ENCODE measurements at regions of chr3 and their contacts with region 1.

Region 1: DNA sequence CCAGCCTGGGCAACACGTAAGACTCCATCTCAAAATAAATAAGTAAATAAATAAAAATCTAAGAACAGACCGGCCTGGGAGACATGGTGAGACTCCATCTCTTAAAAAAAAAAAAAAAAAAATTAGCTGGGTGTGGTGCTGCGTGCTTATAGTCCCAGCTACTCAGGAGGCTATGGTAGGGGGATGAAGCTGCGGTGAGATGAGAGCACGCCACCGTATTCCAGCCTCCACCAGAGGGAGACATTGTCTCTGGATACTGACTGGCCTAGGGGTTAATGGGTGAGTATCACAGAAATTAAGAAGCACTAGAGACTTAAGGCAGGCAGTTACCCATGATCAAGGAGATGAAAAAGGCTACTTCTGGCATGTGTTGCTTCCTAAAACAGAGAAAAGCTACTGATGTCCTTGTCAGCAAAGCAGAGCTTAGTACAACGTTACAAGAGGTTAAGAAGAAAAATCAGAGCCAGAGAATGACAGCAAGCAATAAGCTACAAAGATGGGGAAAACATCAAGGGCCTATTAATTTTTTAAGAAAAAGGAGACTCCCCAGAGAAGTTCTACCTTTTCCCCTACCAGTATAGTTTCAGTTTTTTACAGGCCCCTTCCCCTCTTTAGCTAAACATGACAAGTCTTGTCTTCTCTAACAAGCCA is 8.6 kb downstream of the TFRC start:
- DNase-seq: peak; percentile 41 to 81 (median 66)
- H3K4me3 ChIP-seq: no peak overlapping the region
- H3K4me3 Mint-ChIP-seq: no peak overlapping the region
- H3K27ac ChIP-seq: no peak overlapping the region
- H3K27ac Mint-ChIP-seq: peak overlapping the region; percentile 9 to 81 (median 43)
- H3K4me1 ChIP-seq: peaks cover 13% of the 10 kb centered on the region
- H3K4me1 Mint-ChIP-seq: peaks cover 17 to 42% (median 29%) of the 10 kb centered on the region in 3 donors
- H3K27me3 ChIP-seq: no peaks in the 10 kb centered on the region
- H3K27me3 Mint-ChIP-seq: no peaks in the 10 kb centered on the region

Region 2: DNA sequence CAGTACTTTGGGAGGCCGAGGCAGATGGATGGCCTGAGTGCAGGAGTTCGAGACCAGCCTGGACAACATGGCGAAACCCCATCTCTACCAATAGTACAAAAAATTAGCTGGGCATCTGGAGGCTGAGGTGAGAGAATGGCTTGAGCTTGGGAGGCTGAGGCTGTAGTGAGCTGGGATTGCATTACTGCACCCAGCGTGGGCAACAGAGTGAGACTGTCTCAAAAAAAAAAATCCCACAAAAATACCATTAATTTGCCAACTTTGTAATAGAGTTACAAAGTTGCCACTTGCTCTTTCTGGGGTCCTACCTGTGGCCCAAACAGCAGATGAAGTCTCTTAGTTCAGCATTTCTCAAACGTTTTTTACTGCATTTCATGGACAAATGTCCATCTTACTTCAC is 14.6 kb after region 1 on chr3:
- CTCF ChIA-PET with region 1: interaction called, 13 read pairs
- POLR2A ChIA-PET with region 1: no interaction called
- DNase-seq: no peak
- H3K4me3 ChIP-seq: no peak overlapping the region
- H3K4me3 Mint-ChIP-seq: no peak overlapping the region
- H3K27ac ChIP-seq: no peak overlapping the region
- H3K27ac Mint-ChIP-seq: no peak overlapping the region
- H3K4me1 ChIP-seq: peaks cover 2% of the 10 kb centered on the region
- H3K4me1 Mint-ChIP-seq: peaks cover 0 to 1% (median under 1%) of the 10 kb centered on the region in 3 donors
- H3K27me3 ChIP-seq: no peaks in the 10 kb centered on the region
- H3K27me3 Mint-ChIP-seq: no peaks in the 10 kb centered on the region

Region 3: GRCh38 chr3:196186651-196187573 is 113.6 kb after region 1 on chr3:
- CTCF ChIA-PET with region 1: interaction called, 263 read pairs
- POLR2A ChIA-PET with region 1: no interaction called
- DNase-seq: peak in 1 of 5 donors; percentile 35
- H3K4me3 ChIP-seq: peak overlapping the region; percentile 19
- H3K4me3 Mint-ChIP-seq: peak overlapping the region in 6 of 7 donors; percentile 58 to 87 (median 70)
- H3K27ac ChIP-seq: peak overlapping the region; percentile 16
- H3K27ac Mint-ChIP-seq: peak overlapping the region; percentile 66 to 96 (median 88)
- H3K4me1 ChIP-seq: peaks cover 25% of the 10 kb centered on the region
- H3K4me1 Mint-ChIP-seq: peaks cover 32 to 43% (median 36%) of the 10 kb centered on the region in 3 donors
- H3K27me3 ChIP-seq: no peaks in the 10 kb centered on the region
- H3K27me3 Mint-ChIP-seq: peaks cover 0 to 2% of the 10 kb centered on the region in 2 donors

Region 4: GRCh38 chr3:196192036-196192523 is 118.8 kb after region 1 on chr3:
- CTCF ChIA-PET with region 1: interaction called, 263 read pairs
- POLR2A ChIA-PET with region 1: interaction called, 6 read pairs
- DNase-seq: peak; percentile 22 to 74 (median 43)
- H3K4me3 ChIP-seq: no peak overlapping the region
- H3K4me3 Mint-ChIP-seq: peak overlapping the region in 5 of 7 donors; percentile 55 to 73 (median 71)
- H3K27ac ChIP-seq: peak overlapping the region; percentile 68
- H3K27ac Mint-ChIP-seq: peak overlapping the region; percentile 83 to 98 (median 92)
- H3K4me1 ChIP-seq: peaks cover 27% of the 10 kb centered on the region
- H3K4me1 Mint-ChIP-seq: peaks cover 18 to 47% (median 39%) of the 10 kb centered on the region in 3 donors
- H3K27me3 ChIP-seq: no peaks in the 10 kb centered on the region
- H3K27me3 Mint-ChIP-seq: peaks cover 0 to 2% of the 10 kb centered on the region in 2 donors

Region 5: GRCh38 chr3:196357905-196358304 is 284.6 kb after region 1 on chr3:
- CTCF ChIA-PET with region 1: no interaction called
- POLR2A ChIA-PET with region 1: no interaction called
- DNase-seq: peak in 3 of 5 donors; percentile 2 to 22 (median 7)
- H3K4me3 ChIP-seq: no peak overlapping the region
- H3K4me3 Mint-ChIP-seq: peak overlapping the region in 3 of 7 donors; percentile 2 to 54 (median 34)
- H3K27ac ChIP-seq: no peak overlapping the region
- H3K27ac Mint-ChIP-seq: peak overlapping the region; percentile 9 to 87 (median 68)
- H3K4me1 ChIP-seq: no peaks in the 10 kb centered on the region
- H3K4me1 Mint-ChIP-seq: peaks cover 14 to 31% (median 27%) of the 10 kb centered on the region in 3 donors
- H3K27me3 ChIP-seq: no peaks in the 10 kb centered on the region
- H3K27me3 Mint-ChIP-seq: peaks cover 0 to 2% of the 10 kb centered on the region in 2 donors

Region 6: GRCh38 chr3:196754091-196754923 is 681.0 kb after region 1 on chr3:
- CTCF ChIA-PET with region 1: no interaction called
- POLR2A ChIA-PET with region 1: no interaction called
- DNase-seq: no peak
- H3K4me3 ChIP-seq: no peak overlapping the region
- H3K4me3 Mint-ChIP-seq: no peak overlapping the region
- H3K27ac ChIP-seq: no peak overlapping the region
- H3K27ac Mint-ChIP-seq: peak overlapping the region in 6 of 8 donors; percentile 4 to 88 (median 28)
- H3K4me1 ChIP-seq: no peaks in the 10 kb centered on the region
- H3K4me1 Mint-ChIP-seq: peaks cover 47 to 73% (median 62%) of the 10 kb centered on the region in 3 donors
- H3K27me3 ChIP-seq: no peaks in the 10 kb centered on the region
- H3K27me3 Mint-ChIP-seq: no peaks in the 10 kb centered on the region

Region 7: GRCh38 chr3:197068077-197068476 is 994.8 kb after region 1 on chr3:
- CTCF ChIA-PET with region 1: no interaction called
- POLR2A ChIA-PET with region 1: no interaction called
- DNase-seq: no peak
- H3K4me3 ChIP-seq: no peak overlapping the region
- H3K4me3 Mint-ChIP-seq: no peak overlapping the region
- H3K27ac ChIP-seq: no peak overlapping the region
- H3K27ac Mint-ChIP-seq: no peak overlapping the region
- H3K4me1 ChIP-seq: no peaks in the 10 kb centered on the region
- H3K4me1 Mint-ChIP-seq: no peaks in the 10 kb centered on the region
- H3K27me3 ChIP-seq: no peaks in the 10 kb centered on the region
- H3K27me3 Mint-ChIP-seq: no peaks in the 10 kb centered on the region